CD8-positive, alpha-beta memory T cell (primary cell): ENCODE measurements at regions of chr1 and their contacts with region 1.

Region 1: GRCh38 chr1:111720274-111720976 is 18.8 kb downstream of the INKA2 start:
- DNase-seq: no peak
- H3K4me3 ChIP-seq: no peak overlapping the region
- H3K4me3 Mint-ChIP-seq: no peak overlapping the region
- H3K27ac ChIP-seq: no peak overlapping the region
- H3K27ac Mint-ChIP-seq: peak overlapping the region; percentile 26 to 85 (median 63)
- H3K4me1 ChIP-seq: peaks cover 10% of the 10 kb centered on the region
- H3K4me1 Mint-ChIP-seq: peaks cover 16 to 29% (median 27%) of the 10 kb centered on the region in 3 donors
- H3K27me3 ChIP-seq: no peaks in the 10 kb centered on the region
- H3K27me3 Mint-ChIP-seq: peaks cover 0 to 2% of the 10 kb centered on the region in 2 donors

Region 2: DNA sequence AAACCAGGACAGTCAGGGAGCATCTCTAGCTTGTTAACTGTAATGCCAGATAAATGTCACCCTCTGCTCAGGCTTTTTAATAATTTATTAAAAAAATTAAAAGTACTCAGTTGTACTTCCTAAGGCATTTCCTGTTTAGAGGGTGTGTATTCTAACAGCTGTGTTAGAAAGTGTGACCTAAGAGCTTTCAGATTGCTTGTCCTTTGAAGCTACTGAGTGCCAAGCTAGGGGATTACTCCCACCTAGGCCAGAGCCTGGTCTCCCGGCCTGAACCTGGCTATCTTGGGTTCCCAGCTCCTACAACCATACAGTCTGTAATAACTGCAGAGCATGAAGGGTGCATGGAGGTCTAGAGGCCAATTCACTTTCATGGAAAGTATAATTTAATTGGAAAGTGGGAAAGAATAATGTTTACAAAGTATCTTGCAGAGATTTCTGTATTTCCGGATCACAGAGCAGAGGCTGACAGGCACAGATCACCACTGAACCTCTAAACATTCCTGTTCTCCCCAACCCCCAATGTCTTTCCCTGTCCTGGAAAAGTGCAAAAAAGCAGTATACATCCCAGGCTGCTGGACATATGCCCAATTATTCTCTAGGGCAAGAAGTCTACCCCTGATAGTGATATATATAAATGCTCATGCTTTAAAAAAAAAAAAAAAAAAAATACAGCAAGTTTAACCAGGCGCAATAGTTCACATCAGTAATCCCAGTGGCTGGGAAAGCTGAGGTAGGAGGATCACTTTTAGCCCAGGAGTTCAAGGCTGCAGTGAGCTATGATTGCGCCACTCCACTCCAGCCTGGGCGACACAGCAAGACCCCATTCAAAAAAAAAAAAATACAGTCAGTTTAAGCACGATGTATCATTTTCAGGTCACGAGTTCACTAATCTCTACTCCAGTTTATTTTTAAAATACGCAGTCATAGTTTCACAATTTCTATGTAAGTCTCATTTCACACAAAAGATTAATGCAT is 137.5 kb before region 1 on chr1:
- CTCF ChIA-PET with region 1: no interaction called
- POLR2A ChIA-PET with region 1: no interaction called
- DNase-seq: no peak
- H3K4me3 ChIP-seq: no peak overlapping the region
- H3K4me3 Mint-ChIP-seq: peak overlapping the region in 2 of 7 donors; percentile 12 to 25
- H3K27ac ChIP-seq: no peak overlapping the region
- H3K27ac Mint-ChIP-seq: peak overlapping the region in 4 of 8 donors; percentile 8 to 59 (median 53)
- H3K4me1 ChIP-seq: peaks cover 14% of the 10 kb centered on the region
- H3K4me1 Mint-ChIP-seq: peaks cover 14 to 23% (median 16%) of the 10 kb centered on the region in 3 donors
- H3K27me3 ChIP-seq: no peaks in the 10 kb centered on the region
- H3K27me3 Mint-ChIP-seq: no peaks in the 10 kb centered on the region

Region 3: GRCh38 chr1:111704776-111705175 is 15.6 kb before region 1 on chr1:
- CTCF ChIA-PET with region 1: interaction called, 13 read pairs
- POLR2A ChIA-PET with region 1: no interaction called
- DNase-seq: no peak
- H3K4me3 ChIP-seq: no peak overlapping the region
- H3K4me3 Mint-ChIP-seq: no peak overlapping the region
- H3K27ac ChIP-seq: no peak overlapping the region
- H3K27ac Mint-ChIP-seq: no peak overlapping the region
- H3K4me1 ChIP-seq: no peaks in the 10 kb centered on the region
- H3K4me1 Mint-ChIP-seq: peaks cover 5 to 21% (median 21%) of the 10 kb centered on the region in 3 donors
- H3K27me3 ChIP-seq: no peaks in the 10 kb centered on the region
- H3K27me3 Mint-ChIP-seq: no peaks in the 10 kb centered on the region

Region 4: DNA sequence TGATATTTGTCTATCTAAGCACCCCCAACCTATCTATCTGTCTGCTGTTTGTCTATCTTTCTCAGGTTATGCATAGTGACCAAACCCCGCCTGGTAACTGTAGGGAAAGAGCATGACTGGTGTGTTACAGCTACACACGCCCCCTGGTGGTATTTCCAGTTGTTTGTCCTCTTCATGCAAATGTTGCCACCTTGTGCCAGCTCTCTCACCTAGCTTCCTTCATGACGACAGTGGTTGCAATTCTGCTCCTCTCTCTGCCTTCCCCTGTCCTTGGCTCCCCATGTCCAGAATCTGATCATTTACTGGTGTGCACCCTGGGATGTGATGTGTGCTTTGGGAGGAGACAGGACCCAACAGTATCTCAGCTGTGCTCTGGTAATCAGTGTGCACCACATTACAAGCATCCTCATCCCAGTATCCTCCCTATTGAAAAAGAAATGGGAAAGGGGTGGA is 26.9 kb after region 1 on chr1:
- CTCF ChIA-PET with region 1: interaction called, 18 read pairs
- POLR2A ChIA-PET with region 1: no interaction called
- DNase-seq: peak; percentile 23 to 57 (median 39)
- H3K4me3 ChIP-seq: no peak overlapping the region
- H3K4me3 Mint-ChIP-seq: no peak overlapping the region
- H3K27ac ChIP-seq: no peak overlapping the region
- H3K27ac Mint-ChIP-seq: peak overlapping the region in 1 of 8 donors; percentile 14
- H3K4me1 ChIP-seq: no peaks in the 10 kb centered on the region
- H3K4me1 Mint-ChIP-seq: no peaks in the 10 kb centered on the region
- H3K27me3 ChIP-seq: no peaks in the 10 kb centered on the region
- H3K27me3 Mint-ChIP-seq: peaks cover 3% of the 10 kb centered on the region in 2 donors

Region 5: GRCh38 chr1:111755331-111756123 is 35.1 kb after region 1 on chr1 and contains the start of gene DDX20:
- CTCF ChIA-PET with region 1: interaction called, 15 read pairs
- POLR2A ChIA-PET with region 1: no interaction called
- DNase-seq: peak; percentile 92 to 95 (median 95)
- H3K4me3 ChIP-seq: peak within 1 kb of the TSS; percentile 86
- H3K4me3 Mint-ChIP-seq: peak within 1 kb of the TSS; percentile 89 to 99 (median 95)
- H3K27ac ChIP-seq: peak within 1 kb of the TSS; percentile 85
- H3K27ac Mint-ChIP-seq: peak within 1 kb of the TSS; percentile 97 to 99 (median 98)
- H3K4me1 ChIP-seq: peaks cover 19% of the 10 kb centered on the region
- H3K4me1 Mint-ChIP-seq: peaks cover 35 to 52% (median 41%) of the 10 kb centered on the region in 3 donors
- H3K27me3 ChIP-seq: no peaks in the 10 kb centered on the region
- H3K27me3 Mint-ChIP-seq: peaks cover 0 to 1% of the 10 kb centered on the region in 2 donors
- total RNA-seq, gene DDX20: 21.8 to 22.7 TPM

Region 6: GRCh38 chr1:111769517-111770146 is 49.2 kb after region 1 on chr1:
- CTCF ChIA-PET with region 1: interaction called, 44 read pairs
- POLR2A ChIA-PET with region 1: no interaction called
- DNase-seq: peak in 3 of 5 donors; percentile 38 to 53 (median 49)
- H3K4me3 ChIP-seq: no peak overlapping the region
- H3K4me3 Mint-ChIP-seq: no peak overlapping the region
- H3K27ac ChIP-seq: no peak overlapping the region
- H3K27ac Mint-ChIP-seq: peak overlapping the region in 6 of 8 donors; percentile 1 to 65 (median 24)
- H3K4me1 ChIP-seq: no peaks in the 10 kb centered on the region
- H3K4me1 Mint-ChIP-seq: peaks cover 2 to 6% (median 5%) of the 10 kb centered on the region in 3 donors
- H3K27me3 ChIP-seq: no peaks in the 10 kb centered on the region
- H3K27me3 Mint-ChIP-seq: no peaks in the 10 kb centered on the region

Region 7: GRCh38 chr1:111856411-111857185 is 136.2 kb after region 1 on chr1:
- CTCF ChIA-PET with region 1: no interaction called
- POLR2A ChIA-PET with region 1: no interaction called
- DNase-seq: no peak
- H3K4me3 ChIP-seq: no peak overlapping the region
- H3K4me3 Mint-ChIP-seq: no peak overlapping the region
- H3K27ac ChIP-seq: no peak overlapping the region
- H3K27ac Mint-ChIP-seq: no peak overlapping the region
- H3K4me1 ChIP-seq: no peaks in the 10 kb centered on the region
- H3K4me1 Mint-ChIP-seq: no peaks in the 10 kb centered on the region
- H3K27me3 ChIP-seq: no peaks in the 10 kb centered on the region
- H3K27me3 Mint-ChIP-seq: peaks cover 36 to 75% of the 10 kb centered on the region in 2 donors